Prostate gland (tissue), 2 donors: ENCODE measurements at regions of chr1 and their contacts with region 1.

Region 1: GRCh38 chr1:16155532-16156410 is at the start of gene EPHA2:
- DNase-seq: peak; percentile 92
- H3K4me3 ChIP-seq: peak within 1 kb of the TSS; percentile 43 to 50
- H3K27ac ChIP-seq: peak within 1 kb of the TSS; percentile 69 to 76
- H3K4me1 ChIP-seq: no peaks in the 10 kb centered on the region
- H3K27me3 ChIP-seq: no peaks in the 10 kb centered on the region
- CTCF ChIP-seq: no peak
- POLR2A ChIP-seq: peak; percentile 98
- total RNA-seq, gene EPHA2: 14.8 to 17.7 TPM

Region 2: DNA sequence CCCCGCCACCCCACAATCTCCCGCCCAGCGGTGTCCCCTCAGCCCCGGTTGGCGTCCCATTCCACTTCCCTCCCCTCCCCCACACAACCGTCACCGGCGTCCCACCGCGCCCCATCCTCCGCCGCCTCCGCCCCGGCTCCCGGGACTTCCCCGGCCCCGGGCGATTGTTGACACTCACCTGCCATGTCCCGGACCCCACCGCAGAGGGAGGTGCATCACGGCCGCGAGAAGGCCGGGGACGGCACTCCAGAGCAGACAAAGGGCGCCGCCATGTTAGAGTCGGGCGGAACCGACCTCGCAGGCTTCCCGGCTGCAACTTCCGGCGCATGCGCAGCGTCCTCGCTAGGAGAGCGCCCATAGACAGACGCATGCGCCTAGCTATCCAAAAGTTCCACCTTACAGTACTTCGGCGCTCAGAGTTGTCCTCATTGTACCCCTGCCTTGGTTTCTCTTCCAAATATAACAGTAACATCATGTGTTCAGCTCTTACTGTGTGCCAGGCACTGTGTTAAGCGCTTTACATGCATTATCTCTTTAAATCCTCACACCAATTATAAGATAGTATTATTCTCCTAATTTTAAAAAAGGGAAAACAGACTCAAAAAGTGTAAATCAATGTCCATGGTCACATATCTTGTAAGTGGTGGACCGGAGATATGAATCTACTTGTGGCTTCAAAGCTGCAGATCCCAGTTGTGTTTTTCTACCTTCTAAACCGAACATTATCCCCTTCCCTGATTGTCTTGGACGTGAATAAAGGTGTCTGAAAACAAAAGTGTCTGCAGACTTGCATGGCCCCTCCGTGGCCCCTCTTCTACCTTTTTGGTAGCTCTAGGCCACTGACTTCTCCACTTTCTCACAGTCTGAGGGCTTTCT is 179.7 kb before region 1 on chr1 and contains the start of gene ZBTB17:
- intact Hi-C with region 1: no loop called
- DNase-seq: peak; percentile 88
- H3K4me3 ChIP-seq: peak within 1 kb of the TSS; percentile 93 to 94
- H3K27ac ChIP-seq: peak within 1 kb of the TSS; percentile 72 to 79
- H3K4me1 ChIP-seq: peaks cover 4% of the 10 kb centered on the region
- H3K27me3 ChIP-seq: no peaks in the 10 kb centered on the region
- CTCF ChIP-seq: peak in 2 of 4 experiments; percentile 23
- POLR2A ChIP-seq: peak; percentile 61
- total RNA-seq, gene ZBTB17: 28.2 to 50.8 TPM

Region 3: DNA sequence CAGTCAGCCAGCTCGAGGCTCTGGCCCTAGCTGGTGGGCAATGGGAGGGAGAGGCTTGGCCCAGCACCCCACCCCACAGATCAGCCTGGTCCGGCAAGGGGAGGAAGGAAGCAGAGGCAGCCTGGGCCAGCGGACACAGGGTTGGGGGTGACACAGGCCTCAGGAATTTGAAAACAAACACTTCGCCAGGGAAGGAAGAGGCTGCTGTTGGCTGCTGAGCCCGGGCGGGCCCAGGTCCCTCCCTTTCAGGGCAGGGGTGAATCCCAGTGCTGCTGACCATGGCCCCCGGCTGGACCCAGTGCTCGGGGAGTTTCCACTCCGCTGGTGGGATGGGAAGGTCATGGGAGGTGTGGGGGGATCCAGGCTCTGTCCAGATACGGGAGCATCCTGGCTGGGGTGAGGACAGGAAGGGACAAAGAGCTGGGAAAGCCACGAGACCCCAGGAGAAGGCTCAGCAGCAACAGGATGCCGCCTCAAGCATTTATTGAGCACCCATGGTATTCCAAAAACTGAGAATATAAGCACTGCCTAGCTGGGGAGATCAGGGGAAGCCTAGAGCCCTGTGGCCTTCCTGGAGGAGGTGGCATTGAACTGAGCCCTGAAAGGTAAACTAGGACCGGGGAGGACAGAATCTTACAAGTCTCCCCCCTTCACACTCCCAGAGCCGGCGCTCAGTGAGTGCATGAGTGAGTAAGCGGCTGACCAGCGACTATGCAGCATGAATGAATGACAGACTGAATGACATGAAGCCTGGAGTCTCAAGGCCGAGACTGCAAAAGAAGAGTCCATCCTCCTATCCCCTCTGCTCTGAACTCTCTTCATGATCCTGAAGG is 26.3 kb after region 1 on chr1:
- intact Hi-C with region 1: loop called (anchors 2 kb)
- DNase-seq: peak; percentile 89
- H3K4me3 ChIP-seq: no peak overlapping the region
- H3K27ac ChIP-seq: peak overlapping the region; percentile 76 to 83
- H3K4me1 ChIP-seq: peaks cover 17% of the 10 kb centered on the region
- H3K27me3 ChIP-seq: no peaks in the 10 kb centered on the region
- CTCF ChIP-seq: no peak
- POLR2A ChIP-seq: no peak